ENCODE measurements at regions of chr13 and their contacts with region 1.

Region 1: DNA sequence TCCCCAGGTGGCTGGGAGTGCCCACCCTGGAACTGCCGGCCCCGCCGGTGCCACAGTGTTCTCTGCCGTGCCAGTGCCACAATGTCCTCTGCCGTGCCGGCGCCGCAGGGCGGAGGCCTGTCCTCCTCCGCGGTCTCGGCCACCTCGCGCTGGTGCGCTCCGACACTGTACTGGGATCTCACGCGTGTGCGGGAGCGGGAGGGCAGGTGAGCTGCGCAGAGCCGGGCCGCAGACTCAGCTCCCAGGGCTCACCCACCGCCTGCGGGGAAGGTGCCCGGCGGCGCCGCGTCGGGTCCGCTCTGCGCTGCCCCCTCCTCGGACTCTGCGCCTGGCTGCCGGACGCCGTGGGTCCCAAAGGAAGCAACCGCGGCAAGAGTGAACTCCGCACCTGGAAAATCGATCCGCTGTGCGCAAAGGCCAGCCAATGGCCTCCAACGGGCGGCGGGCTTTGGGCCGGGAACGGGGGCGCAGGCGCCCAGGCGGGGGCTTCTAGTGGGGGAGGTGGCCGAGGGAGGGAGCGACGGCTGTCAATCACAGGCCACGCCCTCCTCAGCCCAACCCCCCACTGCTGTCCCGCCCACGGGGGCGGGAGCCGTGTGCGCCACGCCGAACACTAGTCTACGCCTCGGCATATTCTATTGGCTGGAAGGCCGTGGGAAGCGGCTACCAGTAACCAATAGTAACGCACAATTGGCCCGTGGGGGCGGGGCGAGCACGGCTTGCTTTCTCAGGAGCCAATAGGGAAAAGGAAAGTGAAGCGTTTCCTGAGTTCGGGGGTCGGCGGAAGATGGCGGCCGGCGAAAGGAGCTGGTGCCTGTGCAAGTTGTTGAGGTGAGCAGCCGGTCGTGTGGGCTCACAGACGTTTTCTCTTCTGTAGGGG is at the start of gene ALG11:
- DNase-seq: peak; percentile 100
- H3K4me3 Mint-ChIP-seq: peak within 1 kb of the TSS; percentile 99
- H3K27ac Mint-ChIP-seq: peak within 1 kb of the TSS; percentile 93
- H3K4me1 Mint-ChIP-seq: peaks cover 8% of the 10 kb centered on the region
- H3K27me3 Mint-ChIP-seq: peaks cover 34% of the 10 kb centered on the region
- total RNA-seq, gene ALG11: 26.7 and 28.0 TPM in 2 replicates

Region 2: GRCh38 chr13:51269039-51269438 is 742.8 kb before region 1 on chr13:
- intact Hi-C with region 1: no loop called
- DNase-seq: no peak
- H3K4me3 Mint-ChIP-seq: no peak overlapping the region
- H3K27ac Mint-ChIP-seq: no peak overlapping the region
- H3K4me1 Mint-ChIP-seq: no peaks in the 10 kb centered on the region
- H3K27me3 Mint-ChIP-seq: peaks cover 4% of the 10 kb centered on the region

Region 3: GRCh38 chr13:52319876-52320275 is 308.0 kb after region 1 on chr13:
- intact Hi-C with region 1: no loop called
- DNase-seq: peak; percentile 34
- H3K4me3 Mint-ChIP-seq: no peak overlapping the region
- H3K27ac Mint-ChIP-seq: no peak overlapping the region
- H3K4me1 Mint-ChIP-seq: no peaks in the 10 kb centered on the region
- H3K27me3 Mint-ChIP-seq: peaks cover 12% of the 10 kb centered on the region

Region 4: DNA sequence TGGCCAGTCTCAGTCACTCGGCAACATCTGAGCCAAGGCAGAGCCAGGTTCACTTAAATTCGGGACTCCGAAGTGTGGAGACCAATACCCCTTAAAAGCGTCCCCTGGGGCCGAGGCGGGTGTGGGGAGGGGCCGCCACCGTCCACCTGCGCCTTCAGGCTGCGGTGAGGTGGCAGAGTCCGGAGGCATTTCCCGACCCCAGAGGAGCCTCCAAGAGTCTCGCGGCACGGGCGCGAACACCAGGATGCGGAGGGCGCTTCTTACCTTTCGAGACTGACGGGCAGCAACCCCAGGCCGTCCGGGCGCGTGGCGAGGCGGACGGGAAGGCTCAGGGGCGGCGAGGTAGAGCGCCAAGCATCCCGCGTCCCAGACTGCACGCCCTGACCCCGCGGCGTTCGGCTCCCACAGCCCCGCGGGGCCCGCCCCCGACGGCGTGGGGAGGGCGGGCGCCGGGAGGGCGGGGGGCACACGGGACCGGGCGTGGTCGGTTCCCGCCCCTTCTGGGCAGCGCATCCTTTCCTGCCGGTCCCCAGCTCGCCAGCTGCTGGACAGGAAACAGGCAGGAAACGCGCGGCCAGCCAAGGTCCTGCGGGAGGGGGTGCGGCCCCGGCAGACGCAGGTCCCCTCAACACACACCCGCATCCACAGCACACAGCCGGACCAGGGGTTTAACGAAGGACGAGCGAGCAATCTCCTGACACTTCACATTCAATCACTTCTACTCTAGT is 394.1 kb after region 1 on chr13 and contains the start of gene THSD1:
- intact Hi-C with region 1: loop called (anchors 2 kb)
- DNase-seq: peak; percentile 67
- H3K4me3 Mint-ChIP-seq: peak within 1 kb of the TSS; percentile 77
- H3K27ac Mint-ChIP-seq: no peak within 1 kb of the TSS
- H3K4me1 Mint-ChIP-seq: peaks cover 14% of the 10 kb centered on the region
- H3K27me3 Mint-ChIP-seq: peaks cover 29% of the 10 kb centered on the region
- total RNA-seq, gene THSD1: 0.14 and 0.21 TPM in 2 replicates

Measured in activated CD4-positive, alpha-beta T cell treated with anti-CD3 and anti-CD28 coated beads, Interleukin-2, amount 10 ng/mL, durations not matched to agents 24 days and 14 days (primary cell).